ENCODE measurements at regions of chr5 and their contacts with region 1.

Region 1: GRCh38 chr5:69189162-69190086 is at the start of gene CENPH:
- DNase-seq: peak; percentile 99
- H3K4me3 Mint-ChIP-seq: peak within 1 kb of the TSS; percentile 95
- H3K27ac Mint-ChIP-seq: peak within 1 kb of the TSS; percentile 97
- H3K4me1 Mint-ChIP-seq: peaks cover 8% of the 10 kb centered on the region
- H3K27me3 Mint-ChIP-seq: no peaks in the 10 kb centered on the region
- total RNA-seq, gene CENPH: 40.7 and 42.4 TPM in 2 replicates

Region 2: GRCh38 chr5:69166686-69167492 is 22.5 kb before region 1 on chr5 and contains the start of gene CCNB1:
- intact Hi-C with region 1: loop called (anchors 1 kb)
- DNase-seq: peak; percentile 100
- H3K4me3 Mint-ChIP-seq: peak within 1 kb of the TSS; percentile 98
- H3K27ac Mint-ChIP-seq: peak within 1 kb of the TSS; percentile 95
- H3K4me1 Mint-ChIP-seq: peaks cover 33% of the 10 kb centered on the region
- H3K27me3 Mint-ChIP-seq: peaks cover 2% of the 10 kb centered on the region
- total RNA-seq, gene CCNB1: 117 and 122 TPM in 2 replicates

Region 3: DNA sequence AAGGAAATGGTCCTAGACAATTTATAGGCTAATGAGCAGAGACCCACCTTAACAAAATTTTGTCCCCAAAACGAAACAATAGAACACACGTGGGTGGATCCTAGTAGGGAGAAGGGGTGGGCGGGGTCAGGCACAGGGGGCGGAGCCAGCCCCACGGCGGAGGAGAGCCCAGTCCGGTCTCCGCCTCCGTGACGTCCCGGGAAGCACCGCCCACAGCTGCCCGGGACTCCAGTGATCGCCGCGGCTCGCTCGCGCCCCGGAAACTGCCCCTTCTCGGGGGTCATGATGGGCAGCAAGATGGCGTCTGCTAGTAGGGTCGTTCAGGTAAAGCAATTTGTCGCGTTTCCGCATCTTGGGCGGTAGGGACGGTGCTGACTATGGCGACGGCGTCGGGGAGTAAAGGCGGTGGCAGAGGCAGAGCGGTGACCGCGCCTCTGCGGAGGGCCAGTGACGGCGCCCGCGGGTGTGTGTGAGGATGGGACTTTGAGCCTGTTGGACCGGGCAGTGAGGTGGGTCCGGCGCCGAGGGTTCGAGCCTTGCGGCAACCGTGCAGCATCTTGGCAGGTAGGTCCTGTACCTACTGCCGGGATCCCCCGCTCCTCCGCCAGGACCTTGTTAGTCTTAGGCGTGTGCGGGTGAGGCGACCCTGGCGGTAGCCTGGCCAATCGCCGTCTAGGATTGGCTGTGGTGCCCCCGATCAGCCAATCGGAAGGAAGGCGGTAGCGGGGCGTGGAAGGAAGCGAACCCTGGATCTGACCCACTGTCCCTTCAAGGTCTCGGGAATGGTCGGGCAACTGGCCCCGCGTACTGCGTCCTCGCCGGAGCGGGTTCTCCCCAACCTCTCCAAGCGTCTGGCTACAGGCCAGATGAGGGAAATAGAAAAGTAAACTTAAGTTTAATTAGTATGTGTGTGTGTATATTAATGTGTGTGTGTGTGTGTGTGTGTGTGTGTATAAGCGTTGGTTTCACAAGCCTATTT is 28.4 kb after region 1 on chr5:
- intact Hi-C with region 1: loop called (anchors 1 kb)
- DNase-seq: peak; percentile 98
- H3K4me3 Mint-ChIP-seq: peak overlapping the region; percentile 96
- H3K27ac Mint-ChIP-seq: peak overlapping the region; percentile 98
- H3K4me1 Mint-ChIP-seq: peaks cover 17% of the 10 kb centered on the region
- H3K27me3 Mint-ChIP-seq: no peaks in the 10 kb centered on the region

Region 4: GRCh38 chr5:69234457-69235268 is 45.2 kb after region 1 on chr5 and contains the start of gene CDK7:
- intact Hi-C with region 1: loop called (anchors 1 kb)
- DNase-seq: peak; percentile 98
- H3K4me3 Mint-ChIP-seq: peak within 1 kb of the TSS; percentile 97
- H3K27ac Mint-ChIP-seq: peak within 1 kb of the TSS; percentile 86
- H3K4me1 Mint-ChIP-seq: peaks cover 28% of the 10 kb centered on the region
- H3K27me3 Mint-ChIP-seq: no peaks in the 10 kb centered on the region
- total RNA-seq, gene CDK7: 45.6 and 54.2 TPM in 2 replicates

Region 5: DNA sequence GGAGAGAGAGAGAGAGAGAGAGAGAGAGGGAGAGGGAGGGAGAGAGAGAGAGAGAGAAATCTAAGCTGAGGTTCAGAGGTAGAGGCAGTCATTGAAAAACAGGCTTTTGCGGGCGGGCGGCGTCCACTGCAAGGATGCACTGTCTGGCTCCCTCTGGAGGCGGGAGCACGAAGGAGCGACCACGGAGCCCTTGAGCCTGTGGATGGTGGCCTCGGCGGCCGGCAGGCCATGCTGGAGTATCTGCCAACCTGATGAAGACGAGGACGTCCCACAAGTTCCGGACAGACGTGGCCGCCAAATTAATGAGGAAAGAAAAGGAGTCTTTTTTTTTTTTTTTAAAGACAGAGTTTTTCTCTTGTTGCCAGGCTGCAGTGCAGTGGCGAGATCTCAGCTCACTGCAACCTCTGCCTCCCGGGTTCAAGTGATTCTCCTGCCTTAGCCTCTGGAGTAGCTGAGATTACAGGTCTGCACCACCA is 145.4 kb after region 1 on chr5:
- intact Hi-C with region 1: loop called (anchors 1 kb)
- DNase-seq: peak; percentile 93
- H3K4me3 Mint-ChIP-seq: no peak overlapping the region
- H3K27ac Mint-ChIP-seq: peak overlapping the region; percentile 3
- H3K4me1 Mint-ChIP-seq: peaks cover 17% of the 10 kb centered on the region
- H3K27me3 Mint-ChIP-seq: no peaks in the 10 kb centered on the region

Region 6: GRCh38 chr5:69369369-69370121 is 180.1 kb after region 1 on chr5 and contains the starts of genes AK6, RAD17 and TAF9:
- intact Hi-C with region 1: loop called (anchors 1 kb)
- DNase-seq: peak; percentile 97
- H3K4me3 Mint-ChIP-seq: peak within 1 kb of the TSS; percentile 95
- H3K27ac Mint-ChIP-seq: peak within 1 kb of the TSS; percentile 97
- H3K4me1 Mint-ChIP-seq: peaks cover 29% of the 10 kb centered on the region
- H3K27me3 Mint-ChIP-seq: no peaks in the 10 kb centered on the region
- total RNA-seq, gene AK6: 66.7 and 67.0 TPM in 2 replicates
- total RNA-seq, gene RAD17: 22.7 and 26.8 TPM in 2 replicates
- total RNA-seq, gene TAF9: 63.0 and 65.0 TPM in 2 replicates

Measured in activated CD4-positive, alpha-beta T cell treated with anti-CD3 and anti-CD28 coated beads, Interleukin-2, amount 10 ng/mL, durations not matched to agents 24 days and 14 days (primary cell).